ENCODE measurements at regions of chr12 and their contacts with region 1.

Region 1: GRCh38 chr12:56645717-56646446 is at the start of gene ATP5F1B:
- DNase-seq: peak; percentile 100
- H3K4me3 Mint-ChIP-seq: peak within 1 kb of the TSS; percentile 74
- H3K27ac Mint-ChIP-seq: peak within 1 kb of the TSS; percentile 93
- H3K4me1 Mint-ChIP-seq: peaks cover 9% of the 10 kb centered on the region
- H3K27me3 Mint-ChIP-seq: no peaks in the 10 kb centered on the region
- CTCF ChIP-seq: no peak
- total RNA-seq, gene ATP5F1B: 719 and 909 TPM in 2 replicates

Region 2: GRCh38 chr12:56488041-56488955 is 157.6 kb before region 1 on chr12 and contains the start of gene GLS2:
- CTCF ChIA-PET with region 1: no interaction called
- POLR2A ChIA-PET with region 1: no interaction called
- intact Hi-C with region 1: no loop called
- DNase-seq: peak; percentile 86
- H3K4me3 Mint-ChIP-seq: peak within 1 kb of the TSS; percentile 89
- H3K27ac Mint-ChIP-seq: peak within 1 kb of the TSS; percentile 37
- H3K4me1 Mint-ChIP-seq: peaks cover 11% of the 10 kb centered on the region
- H3K27me3 Mint-ChIP-seq: no peaks in the 10 kb centered on the region
- CTCF ChIP-seq: no peak
- total RNA-seq, gene GLS2: 3.9 and 4.8 TPM in 2 replicates

Region 3: GRCh38 chr12:56521590-56522371 is 124.1 kb before region 1 on chr12 and contains the start of gene RBMS2:
- CTCF ChIA-PET with region 1: no interaction called
- POLR2A ChIA-PET with region 1: interaction called, 24 read pairs
- intact Hi-C with region 1: no loop called
- DNase-seq: peak; percentile 94
- H3K4me3 Mint-ChIP-seq: peak within 1 kb of the TSS; percentile 74
- H3K27ac Mint-ChIP-seq: peak within 1 kb of the TSS; percentile 91
- H3K4me1 Mint-ChIP-seq: peaks cover 32% of the 10 kb centered on the region
- H3K27me3 Mint-ChIP-seq: no peaks in the 10 kb centered on the region
- CTCF ChIP-seq: no peak
- total RNA-seq, gene RBMS2: 34.9 and 62.7 TPM in 2 replicates

Region 4: DNA sequence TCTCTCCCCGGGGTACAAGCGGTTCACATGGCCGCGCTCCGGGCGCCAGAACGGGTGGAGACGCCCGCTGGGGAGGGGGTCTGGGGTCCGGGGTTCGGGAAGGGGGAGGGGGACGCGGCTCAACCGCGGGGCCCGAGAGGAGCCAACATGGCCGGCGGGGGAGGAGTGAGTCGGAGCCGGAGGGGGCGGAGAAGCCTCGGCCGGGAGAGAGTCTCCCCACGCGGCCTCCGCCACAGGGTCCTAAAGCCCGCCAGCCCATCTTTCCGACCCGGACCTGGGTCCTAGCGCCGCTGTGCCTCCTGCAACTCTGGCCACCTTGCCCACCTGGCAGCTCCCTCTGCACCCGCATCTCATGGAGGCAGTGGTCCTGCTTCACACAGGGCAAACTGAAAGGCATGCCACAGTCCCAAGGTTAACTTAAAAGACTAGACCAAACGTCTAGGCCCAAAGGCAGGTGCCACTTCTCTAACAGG is 15.7 kb before region 1 on chr12 and contains the start of gene BAZ2A:
- CTCF ChIA-PET with region 1: interaction called, 36 read pairs
- POLR2A ChIA-PET with region 1: interaction called, 114 read pairs
- intact Hi-C with region 1: no loop called
- DNase-seq: peak; percentile 83
- H3K4me3 Mint-ChIP-seq: peak within 1 kb of the TSS; percentile 71
- H3K27ac Mint-ChIP-seq: peak within 1 kb of the TSS; percentile 11
- H3K4me1 Mint-ChIP-seq: peaks cover 38% of the 10 kb centered on the region
- H3K27me3 Mint-ChIP-seq: no peaks in the 10 kb centered on the region
- CTCF ChIP-seq: no peak
- total RNA-seq, gene BAZ2A: 87.3 and 101 TPM in 2 replicates

Region 5: DNA sequence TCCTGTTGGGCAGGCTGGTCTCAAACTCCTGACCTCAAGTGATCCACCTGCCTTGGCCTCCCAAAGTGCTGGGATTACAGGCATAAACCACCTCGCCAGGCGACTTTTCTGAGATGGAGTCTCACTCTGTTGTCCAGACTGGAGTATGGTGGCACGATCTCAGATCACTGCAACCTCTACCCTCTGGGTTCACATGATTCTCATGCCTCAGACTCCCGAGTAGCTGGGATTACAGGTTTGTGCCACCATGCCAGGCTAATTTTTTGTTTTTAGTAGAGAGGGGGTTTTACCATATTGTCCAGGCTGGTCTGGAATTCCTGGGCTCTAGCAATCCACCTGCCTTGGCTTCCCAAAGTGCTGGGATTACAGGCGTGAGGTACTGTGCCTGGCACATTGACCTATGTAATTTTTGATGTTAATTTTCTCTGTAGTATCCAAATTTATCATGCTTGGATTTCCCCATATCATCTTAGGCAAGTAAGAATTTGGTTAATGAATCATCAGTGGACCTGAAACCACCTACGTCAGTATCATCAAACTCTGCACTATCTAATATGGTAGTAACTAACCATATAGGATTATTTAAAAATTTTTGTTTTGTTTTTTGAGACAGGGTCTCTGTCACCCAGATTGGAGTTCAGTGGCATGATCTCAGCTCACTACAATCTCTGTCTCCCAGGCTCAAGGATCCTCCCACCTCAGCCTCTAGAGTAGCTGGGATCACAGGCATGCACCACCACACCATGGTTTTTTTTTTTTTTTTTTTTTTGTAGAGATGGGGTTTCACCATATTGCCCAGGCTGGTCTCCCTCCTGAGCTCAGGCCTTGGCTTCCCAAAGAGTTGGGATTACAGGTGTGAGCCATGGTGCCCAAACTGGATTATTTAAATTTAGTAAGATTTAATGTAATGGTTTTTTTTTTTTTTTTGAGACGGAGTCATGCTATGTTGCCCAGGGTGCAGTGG is 11.8 kb after region 1 on chr12:
- CTCF ChIA-PET with region 1: no interaction called
- POLR2A ChIA-PET with region 1: interaction called, 23 read pairs
- intact Hi-C with region 1: no loop called
- DNase-seq: peak; percentile 43
- H3K4me3 Mint-ChIP-seq: no peak overlapping the region
- H3K27ac Mint-ChIP-seq: no peak overlapping the region
- H3K4me1 Mint-ChIP-seq: peaks cover 6% of the 10 kb centered on the region
- H3K27me3 Mint-ChIP-seq: no peaks in the 10 kb centered on the region
- CTCF ChIP-seq: no peak

Region 6: GRCh38 chr12:56724972-56725722 is 79.3 kb after region 1 on chr12 and contains the start of gene NACA:
- CTCF ChIA-PET with region 1: interaction called, 4 read pairs
- POLR2A ChIA-PET with region 1: interaction called, 35 read pairs
- intact Hi-C with region 1: no loop called
- DNase-seq: peak; percentile 97
- H3K4me3 Mint-ChIP-seq: peak within 1 kb of the TSS; percentile 91
- H3K27ac Mint-ChIP-seq: peak within 1 kb of the TSS; percentile 97
- H3K4me1 Mint-ChIP-seq: peaks cover 28% of the 10 kb centered on the region
- H3K27me3 Mint-ChIP-seq: no peaks in the 10 kb centered on the region
- CTCF ChIP-seq: no peak
- total RNA-seq, gene NACA: 1,274 and 1,490 TPM in 2 replicates